Colonic mucosa (tissue), 4 donors: ENCODE measurements at regions of chr14 and their contacts with region 1.

Region 1: DNA sequence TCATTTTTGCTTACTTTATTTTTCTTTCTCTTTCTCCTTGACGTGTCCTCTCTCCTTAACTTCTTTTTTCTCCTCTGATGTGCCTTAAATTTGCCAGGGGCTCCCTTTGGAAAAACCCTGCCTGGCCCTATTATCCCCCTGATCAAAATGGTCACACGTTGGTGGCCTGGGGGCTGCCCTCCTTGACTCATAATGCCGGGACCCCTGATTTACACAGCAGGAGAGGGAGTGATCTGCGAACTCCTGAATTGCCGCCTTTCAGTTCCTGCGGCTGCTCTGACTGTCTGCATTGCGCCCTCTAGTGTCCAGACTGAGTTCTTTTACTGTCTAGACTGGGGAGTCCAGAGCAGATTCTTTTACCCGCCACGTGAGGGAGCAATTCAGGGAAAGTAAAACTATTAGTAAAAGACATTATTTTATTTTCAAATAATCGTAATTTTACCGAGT is 44.8 kb upstream of the GZMB start:
- DNase-seq: peak; percentile 85
- H3K4me3 ChIP-seq: no peak overlapping the region
- H3K27ac ChIP-seq: no peak overlapping the region
- H3K4me1 ChIP-seq: no peaks in the 10 kb centered on the region
- H3K27me3 ChIP-seq: no peaks in the 10 kb centered on the region
- CTCF ChIP-seq: peak; percentile 98

Region 2: GRCh38 chr14:24481622-24482324 is 197.1 kb before region 1 on chr14:
- intact Hi-C with region 1: loop called (anchors 10 kb)
- DNase-seq: peak; percentile 70
- H3K4me3 ChIP-seq: no peak overlapping the region
- H3K27ac ChIP-seq: no peak overlapping the region
- H3K4me1 ChIP-seq: no peaks in the 10 kb centered on the region
- H3K27me3 ChIP-seq: no peaks in the 10 kb centered on the region
- CTCF ChIP-seq: peak; percentile 48

Region 3: GRCh38 chr14:24595073-24595808 is 83.6 kb before region 1 on chr14:
- intact Hi-C with region 1: no loop called
- DNase-seq: no peak
- H3K4me3 ChIP-seq: no peak overlapping the region
- H3K27ac ChIP-seq: no peak overlapping the region
- H3K4me1 ChIP-seq: no peaks in the 10 kb centered on the region
- H3K27me3 ChIP-seq: no peaks in the 10 kb centered on the region
- CTCF ChIP-seq: no peak